ENCODE measurements at regions of chr4 and their contacts with region 1.

Region 1: DNA sequence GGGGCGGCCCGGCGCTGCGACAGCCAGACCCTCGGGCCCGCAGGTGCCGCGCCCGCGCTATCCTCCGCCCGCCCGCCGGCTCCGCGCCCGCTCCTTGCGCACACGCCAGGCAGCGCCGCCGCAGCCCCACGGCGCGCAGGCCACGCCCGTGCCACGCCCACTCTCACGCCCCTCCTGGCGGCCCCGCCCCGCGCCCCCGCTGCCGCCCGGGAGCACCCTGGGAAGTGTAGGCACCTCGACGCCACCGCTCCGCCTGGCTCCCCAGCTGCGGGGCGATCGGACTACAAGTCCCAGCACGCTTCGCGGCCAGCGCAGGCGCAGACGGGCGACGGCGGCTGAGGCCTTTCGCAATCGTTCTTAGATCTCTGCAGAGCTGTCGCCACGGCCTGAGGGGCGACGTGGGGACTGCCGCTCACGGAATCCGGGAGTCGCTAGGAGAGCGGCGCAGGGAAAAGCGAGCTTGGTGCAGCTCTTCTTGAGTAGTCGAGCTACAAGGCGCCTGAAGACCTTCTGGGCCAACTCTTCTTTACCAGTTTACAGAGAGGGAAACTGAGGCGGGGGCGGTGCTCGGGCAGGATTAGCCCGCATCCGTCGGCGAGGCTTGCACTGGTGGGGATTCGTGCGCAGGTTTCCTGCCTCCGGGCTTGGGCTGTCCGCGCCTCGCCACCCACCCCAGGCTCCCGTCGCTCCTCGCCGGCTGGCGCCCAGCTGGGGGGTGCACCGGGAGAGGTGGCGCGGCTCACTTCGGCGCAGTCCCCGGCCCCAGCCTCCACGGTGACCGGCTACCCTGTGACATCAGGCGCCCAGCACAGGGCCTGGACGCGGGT is at the start of gene ABLIM2:
- DNase-seq: peak; percentile 98 to 99 (median 99)
- ATAC-seq: peak; percentile 99
- H3K4me3 ChIP-seq: peak within 1 kb of the TSS; percentile 63 to 80 (median 67)
- H3K27ac ChIP-seq: peak within 1 kb of the TSS in 2 of 3 donors; percentile 18 to 38
- H3K4me1 ChIP-seq: peaks cover 0 to 16% (median 0%) of the 10 kb centered on the region in 4 donors
- H3K27me3 ChIP-seq: no peaks in the 10 kb centered on the region
- CTCF ChIP-seq: peak in 1 of 4 donors; percentile 9
- POLR2A ChIP-seq: peak; percentile 75
- total RNA-seq, gene ABLIM2: 0.93 to 3.5 (median 2.3) TPM

Region 2: DNA sequence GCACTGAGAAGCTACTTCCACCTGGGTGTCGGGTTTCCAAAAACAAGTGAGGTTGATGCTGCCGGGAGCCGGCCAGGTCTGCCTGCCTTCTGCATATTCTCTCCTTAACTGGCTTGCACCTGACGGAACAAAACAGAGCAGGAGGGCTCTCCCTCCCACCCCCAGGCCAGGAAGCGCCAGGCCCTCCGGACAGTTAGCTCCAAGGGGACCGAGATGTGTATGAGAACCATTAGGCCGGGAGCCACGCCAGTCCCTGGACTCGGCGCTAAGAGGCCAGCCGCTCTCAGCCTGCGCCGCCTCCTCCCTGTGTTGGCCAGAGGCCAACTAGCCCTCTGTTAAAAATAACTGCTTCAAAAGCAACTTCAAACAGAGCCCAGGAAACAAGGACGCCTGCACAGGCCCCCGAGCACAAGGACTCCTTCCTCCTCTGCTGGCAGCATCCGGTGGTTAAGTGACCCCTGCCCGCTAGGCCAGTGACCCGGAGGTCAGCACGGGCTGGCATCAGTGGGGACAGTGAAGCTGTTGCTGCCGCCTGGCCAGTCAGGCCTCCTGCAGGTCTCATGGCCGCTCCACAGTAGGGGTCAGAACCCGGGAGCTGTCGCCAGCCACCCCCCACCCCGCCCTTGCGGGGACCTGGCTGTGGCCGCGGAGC is 108.2 kb before region 1 on chr4:
- intact Hi-C with region 1: loop called in 1 of 2 experiments (anchors 10 kb)
- DNase-seq: peak; percentile 82 to 88 (median 85)
- ATAC-seq: peak; percentile 91 to 97 (median 96)
- H3K4me3 ChIP-seq: peak overlapping the region in 1 of 3 donors; percentile 2
- H3K27ac ChIP-seq: peak overlapping the region in 1 of 3 donors; percentile 9
- H3K4me1 ChIP-seq: peaks cover 0 to 7% (median 3%) of the 10 kb centered on the region in 4 donors
- H3K27me3 ChIP-seq: no peaks in the 10 kb centered on the region
- CTCF ChIP-seq: no peak
- POLR2A ChIP-seq: no peak

Region 3: DNA sequence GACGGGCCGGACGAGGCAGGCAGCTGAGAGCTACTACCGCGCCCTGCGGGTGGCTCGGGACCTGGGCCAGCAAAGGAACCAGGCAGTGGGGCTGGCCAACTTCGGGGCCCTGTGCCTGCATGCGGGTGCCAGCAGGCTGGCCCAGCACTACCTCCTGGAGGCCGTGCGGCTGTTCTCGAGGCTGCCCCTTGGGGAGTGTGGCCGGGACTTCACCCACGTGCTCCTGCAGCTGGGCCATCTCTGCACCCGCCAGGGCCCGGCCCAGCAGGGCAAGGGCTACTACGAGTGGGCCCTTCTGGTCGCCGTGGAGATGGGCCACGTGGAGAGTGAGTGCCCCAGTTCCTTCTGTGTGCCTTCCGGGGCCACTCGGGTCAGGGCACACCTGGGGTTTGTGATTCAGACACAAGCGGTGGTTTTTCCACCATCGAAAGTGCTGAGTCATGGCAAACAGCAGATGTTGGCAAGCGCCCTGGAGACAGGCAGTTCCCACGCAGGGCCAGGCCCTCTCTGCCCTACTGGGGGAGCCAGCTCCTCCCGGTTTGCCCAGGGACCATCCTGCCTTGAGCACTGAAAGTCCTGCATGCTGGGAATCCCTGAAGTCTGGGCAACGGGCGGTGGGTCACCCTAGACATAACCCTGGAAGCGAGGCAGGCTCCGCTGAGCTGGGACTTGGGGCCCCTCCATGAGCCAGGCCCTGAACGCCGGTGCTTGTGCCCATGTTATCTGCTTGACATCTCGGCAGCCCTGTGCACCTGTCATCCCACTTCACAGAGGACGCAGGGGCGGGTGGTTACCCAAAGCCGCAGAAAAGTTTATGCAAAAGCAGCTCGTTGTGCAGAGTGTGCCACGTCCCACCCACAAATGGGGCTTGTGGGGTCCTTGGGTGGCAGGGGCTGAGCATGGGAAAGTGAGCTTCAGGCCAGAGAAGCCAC is 69.7 kb after region 1 on chr4:
- intact Hi-C with region 1: no loop called
- DNase-seq: peak; percentile 88 to 96 (median 96)
- ATAC-seq: peak; percentile 87 to 93 (median 88)
- H3K4me3 ChIP-seq: no peak overlapping the region
- H3K27ac ChIP-seq: peak overlapping the region in 2 of 3 donors; percentile 37 to 59
- H3K4me1 ChIP-seq: peaks cover 0 to 17% (median 9%) of the 10 kb centered on the region in 4 donors
- H3K27me3 ChIP-seq: no peaks in the 10 kb centered on the region
- CTCF ChIP-seq: peak in 2 of 4 donors; percentile 4 to 11
- POLR2A ChIP-seq: peak; percentile 10